Activated CD4-positive, alpha-beta memory T cell treated with anti-CD3 and anti-CD28 coated beads for 36 hours (primary cell): ENCODE measurements at regions of chr6 and their contacts with region 1.

Region 1: GRCh38 chr6:42726485-42727086 is 4.2 kb upstream of the PRPH2 start:
- DNase-seq: peak; percentile 80
- H3K4me3 Mint-ChIP-seq: peak overlapping the region; percentile 77
- H3K27ac Mint-ChIP-seq: peak overlapping the region; percentile 93
- H3K4me1 Mint-ChIP-seq: peaks cover 20% of the 10 kb centered on the region
- H3K27me3 Mint-ChIP-seq: no peaks in the 10 kb centered on the region

Region 2: DNA sequence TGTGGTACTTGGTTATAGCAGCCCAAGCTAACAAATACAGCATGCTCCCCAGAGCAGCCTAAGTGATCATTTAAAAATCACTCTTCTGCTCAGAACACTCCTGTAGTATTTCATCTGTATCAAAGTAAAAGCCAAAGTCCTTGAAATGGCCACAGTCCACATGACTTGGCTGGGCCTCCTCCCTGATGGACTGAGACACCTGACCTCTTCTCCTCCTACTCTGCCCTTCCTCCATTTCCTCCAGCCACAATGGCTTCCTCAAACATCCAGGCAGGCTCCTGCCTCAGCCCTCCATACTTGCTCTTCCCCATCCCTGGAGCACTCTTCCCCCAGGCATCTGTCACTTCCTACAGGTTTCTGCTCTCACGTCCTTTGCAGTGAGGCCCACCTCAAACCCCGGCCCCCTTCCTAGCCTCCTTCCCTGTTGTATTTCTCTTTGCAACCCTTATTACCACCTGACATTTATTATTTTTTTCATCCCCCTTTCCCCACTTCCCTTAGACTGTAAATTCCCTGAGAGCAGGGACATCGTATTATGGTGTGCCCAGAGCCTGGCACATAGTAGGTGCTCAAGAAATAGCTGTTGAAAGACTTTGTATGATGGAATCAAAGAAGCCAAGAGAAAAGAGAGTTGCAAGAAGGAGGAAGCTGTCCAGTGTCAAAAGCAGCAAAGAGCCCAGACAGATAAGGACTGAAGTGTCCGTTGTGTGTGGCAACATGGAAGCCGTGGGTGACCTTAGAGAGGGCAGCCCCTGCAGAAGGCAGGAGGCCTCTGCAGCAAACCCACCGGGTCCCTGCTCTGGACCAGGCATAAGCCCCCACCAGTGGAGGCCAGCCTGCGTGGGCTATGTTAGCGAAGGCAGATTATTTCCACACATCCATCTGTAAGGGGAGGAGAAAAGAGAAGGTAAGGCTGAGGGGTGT is 362.4 kb before region 1 on chr6:
- CTCF ChIA-PET with region 1: no interaction called
- POLR2A ChIA-PET with region 1: no interaction called
- intact Hi-C with region 1: no loop called
- DNase-seq: no peak
- H3K4me3 Mint-ChIP-seq: no peak overlapping the region
- H3K27ac Mint-ChIP-seq: no peak overlapping the region
- H3K4me1 Mint-ChIP-seq: peaks cover 52% of the 10 kb centered on the region
- H3K27me3 Mint-ChIP-seq: no peaks in the 10 kb centered on the region

Region 3: DNA sequence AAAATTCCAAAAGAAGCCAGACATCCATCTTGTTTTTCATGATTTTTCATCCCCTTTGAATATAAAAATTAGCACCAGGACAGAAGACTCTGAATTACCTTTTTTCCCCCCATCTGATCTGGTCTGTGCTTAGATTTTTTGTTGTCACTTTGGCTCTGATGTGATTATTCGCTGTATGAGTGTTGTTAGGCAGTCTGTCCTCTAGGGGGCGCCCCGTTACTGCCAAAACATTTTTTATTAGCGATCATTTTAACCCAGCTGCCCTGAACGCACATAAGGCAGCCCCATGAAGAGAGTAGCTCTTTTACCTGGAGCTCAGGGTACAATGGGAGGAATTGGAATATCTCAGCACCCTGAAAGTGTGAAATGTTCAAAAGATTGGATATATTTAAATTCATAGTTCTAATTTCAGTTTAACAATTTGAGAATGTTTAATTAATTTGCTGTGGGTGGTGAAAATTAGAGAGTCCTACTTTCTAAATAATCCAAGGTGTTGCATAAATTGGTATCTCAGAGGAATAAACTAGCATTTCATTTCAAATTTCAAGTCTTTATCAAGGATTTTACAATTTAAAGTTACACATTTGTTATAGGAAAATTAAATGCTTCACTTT is 64.9 kb before region 1 on chr6:
- CTCF ChIA-PET with region 1: interaction called, 88 read pairs
- POLR2A ChIA-PET with region 1: interaction called, 5 read pairs
- intact Hi-C with region 1: loop called (anchors 1 kb)
- DNase-seq: peak; percentile 88
- H3K4me3 Mint-ChIP-seq: no peak overlapping the region
- H3K27ac Mint-ChIP-seq: no peak overlapping the region
- H3K4me1 Mint-ChIP-seq: no peaks in the 10 kb centered on the region
- H3K27me3 Mint-ChIP-seq: no peaks in the 10 kb centered on the region

Region 4: GRCh38 chr6:42704241-42704936 is 22.2 kb before region 1 on chr6:
- CTCF ChIA-PET with region 1: interaction called, 10 read pairs
- POLR2A ChIA-PET with region 1: no interaction called
- intact Hi-C with region 1: no loop called
- DNase-seq: no peak
- H3K4me3 Mint-ChIP-seq: no peak overlapping the region
- H3K27ac Mint-ChIP-seq: no peak overlapping the region
- H3K4me1 Mint-ChIP-seq: no peaks in the 10 kb centered on the region
- H3K27me3 Mint-ChIP-seq: no peaks in the 10 kb centered on the region

Region 5: GRCh38 chr6:42879372-42880239 is 153.0 kb after region 1 on chr6 and contains the start of gene RPL7L1:
- CTCF ChIA-PET with region 1: interaction called, 4 read pairs
- POLR2A ChIA-PET with region 1: no interaction called
- intact Hi-C with region 1: loop called (anchors 1 kb)
- DNase-seq: peak; percentile 89
- H3K4me3 Mint-ChIP-seq: peak within 1 kb of the TSS; percentile 97
- H3K27ac Mint-ChIP-seq: peak within 1 kb of the TSS; percentile 96
- H3K4me1 Mint-ChIP-seq: peaks cover 17% of the 10 kb centered on the region
- H3K27me3 Mint-ChIP-seq: no peaks in the 10 kb centered on the region
- total RNA-seq, gene RPL7L1: 111 to 117 TPM